Activated CD8-positive, alpha-beta memory T cell treated with anti-CD3 and anti-CD28 coated beads, Interleukin-2, amount 10 ng/mL, durations not matched to agents 7 days and 5 days (primary cell): ENCODE measurements at regions of chr5 and their contacts with region 1.

Region 1: DNA sequence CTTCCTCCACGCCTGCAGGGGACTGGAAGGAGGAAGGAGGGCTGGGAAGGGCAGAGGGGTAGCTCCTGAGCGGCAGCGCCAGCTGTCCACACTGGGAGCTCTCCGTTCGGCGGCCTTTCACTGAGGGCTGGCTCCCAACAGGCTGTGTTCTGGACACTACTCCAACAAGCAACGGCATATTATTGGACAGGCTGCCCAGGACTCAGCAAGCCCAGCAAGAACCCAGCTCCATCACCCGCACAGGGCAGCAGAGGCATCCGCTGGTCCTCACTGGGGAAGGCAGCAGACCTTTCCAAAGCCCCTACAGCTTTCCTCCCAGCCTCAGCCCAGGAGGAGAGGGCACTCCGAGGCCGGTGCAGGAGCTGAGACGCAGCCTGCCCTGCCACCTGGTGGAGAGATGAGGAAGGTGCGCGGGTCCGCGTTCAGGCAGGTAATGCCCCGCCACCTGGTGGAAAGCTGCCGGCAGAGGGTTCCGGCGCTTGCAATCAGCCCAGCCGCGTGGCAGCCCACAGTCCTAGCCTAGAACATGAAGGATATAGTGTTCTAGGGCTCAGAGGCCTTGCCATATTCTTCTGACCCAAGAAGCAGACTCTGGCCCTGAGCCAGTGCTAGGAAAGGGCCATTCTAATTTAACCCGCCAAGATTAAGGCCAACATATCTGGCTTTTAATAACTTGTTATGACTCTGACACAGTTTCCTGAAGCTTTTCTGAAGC is 74.4 kb downstream of the NRG2 start:
- DNase-seq: peak; percentile 92
- ATAC-seq: peak; percentile 100
- H3K4me3 Mint-ChIP-seq: no peak overlapping the region
- H3K27ac Mint-ChIP-seq: no peak overlapping the region
- H3K4me1 Mint-ChIP-seq: no peaks in the 10 kb centered on the region
- H3K27me3 Mint-ChIP-seq: peaks cover 26% of the 10 kb centered on the region

Region 2: GRCh38 chr5:139774980-139775661 is 193.6 kb before region 1 on chr5:
- CTCF ChIA-PET with region 1: interaction called, 76 read pairs
- DNase-seq: peak; percentile 85
- ATAC-seq: peak; percentile 95
- H3K4me3 Mint-ChIP-seq: no peak overlapping the region
- H3K27ac Mint-ChIP-seq: no peak overlapping the region
- H3K4me1 Mint-ChIP-seq: peaks cover 5% of the 10 kb centered on the region
- H3K27me3 Mint-ChIP-seq: peaks cover 13% of the 10 kb centered on the region

Region 3: GRCh38 chr5:139844472-139845145 is 124.1 kb before region 1 on chr5:
- CTCF ChIA-PET with region 1: interaction called, 16 read pairs
- DNase-seq: peak; percentile 85
- ATAC-seq: peak; percentile 27
- H3K4me3 Mint-ChIP-seq: no peak overlapping the region
- H3K27ac Mint-ChIP-seq: no peak overlapping the region
- H3K4me1 Mint-ChIP-seq: peaks cover 4% of the 10 kb centered on the region
- H3K27me3 Mint-ChIP-seq: peaks cover 51% of the 10 kb centered on the region

Region 4: DNA sequence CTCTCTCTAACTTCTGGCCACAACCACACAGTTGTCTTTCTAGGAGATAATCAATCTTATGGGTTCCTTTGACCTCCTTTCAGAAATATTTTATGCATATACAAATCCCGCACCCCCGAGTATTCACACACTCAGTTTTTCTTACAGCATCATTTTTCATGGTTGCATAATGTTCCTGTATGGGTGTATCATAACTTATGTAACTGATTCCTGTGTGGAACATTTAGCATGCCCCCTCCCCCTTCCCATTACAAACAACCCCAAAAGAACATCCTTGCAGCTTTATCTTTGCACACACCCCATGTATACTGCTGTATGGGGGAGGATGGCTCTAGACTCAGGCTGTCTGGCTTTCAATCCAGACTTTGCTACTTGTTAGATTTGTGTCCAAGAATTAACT is 79.3 kb before region 1 on chr5:
- CTCF ChIA-PET with region 1: interaction called, 16 read pairs
- DNase-seq: no peak
- ATAC-seq: no peak
- H3K4me3 Mint-ChIP-seq: no peak overlapping the region
- H3K27ac Mint-ChIP-seq: no peak overlapping the region
- H3K4me1 Mint-ChIP-seq: peaks cover 2% of the 10 kb centered on the region
- H3K27me3 Mint-ChIP-seq: peaks cover 27% of the 10 kb centered on the region

Region 5: DNA sequence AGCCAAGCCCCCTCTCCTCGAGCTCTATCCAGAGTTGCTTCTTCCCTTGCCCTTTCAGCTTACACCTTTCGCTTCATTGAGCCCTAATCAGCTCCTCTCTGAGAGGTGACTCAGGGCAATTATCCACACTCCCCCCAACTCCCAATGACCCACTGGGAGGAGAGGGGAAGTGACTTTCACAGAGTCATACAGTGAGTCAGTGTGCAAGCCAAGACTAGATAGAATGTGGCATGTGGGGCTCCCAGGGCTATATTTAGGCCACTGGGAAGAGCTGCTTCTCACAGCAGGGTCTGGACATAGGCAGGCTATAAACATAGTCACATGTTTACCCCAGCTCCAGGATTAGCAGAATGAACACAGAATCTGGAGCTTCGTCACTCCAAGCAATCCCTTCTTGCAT is 17.0 kb after region 1 on chr5:
- CTCF ChIA-PET with region 1: interaction called, 44 read pairs
- DNase-seq: no peak
- ATAC-seq: no peak
- H3K4me3 Mint-ChIP-seq: no peak overlapping the region
- H3K27ac Mint-ChIP-seq: no peak overlapping the region
- H3K4me1 Mint-ChIP-seq: no peaks in the 10 kb centered on the region
- H3K27me3 Mint-ChIP-seq: peaks cover 37% of the 10 kb centered on the region

Region 6: GRCh38 chr5:140015733-140016132 is 47.0 kb after region 1 on chr5:
- CTCF ChIA-PET with region 1: no interaction called
- DNase-seq: no peak
- ATAC-seq: no peak
- H3K4me3 Mint-ChIP-seq: no peak overlapping the region
- H3K27ac Mint-ChIP-seq: no peak overlapping the region
- H3K4me1 Mint-ChIP-seq: no peaks in the 10 kb centered on the region
- H3K27me3 Mint-ChIP-seq: peaks cover 4% of the 10 kb centered on the region

Region 7: GRCh38 chr5:140628711-140629110 is 660.0 kb after region 1 on chr5:
- CTCF ChIA-PET with region 1: no interaction called
- DNase-seq: no peak
- ATAC-seq: no peak
- H3K4me3 Mint-ChIP-seq: no peak overlapping the region
- H3K27ac Mint-ChIP-seq: no peak overlapping the region
- H3K4me1 Mint-ChIP-seq: peaks cover 19% of the 10 kb centered on the region
- H3K27me3 Mint-ChIP-seq: peaks cover 35% of the 10 kb centered on the region